Activated T-helper 1 cell treated with anti-CD3 and anti-CD28 coated beads, Interleukin-12 subunit alpha, Interleukin-12 subunit beta, Interleukin-2, Interleukin-4 antibody, amounts not matched to agents 30 ng/mL and 10 ng/mL and 1 ng/mL, durations not matched to agents 14 hours and 24 hours and 36 hours (primary cell): ENCODE measurements at regions of chr16 and their contacts with region 1.

Region 1: GRCh38 chr16:66521951-66522771 is 27.8 kb downstream of the TK2 start:
- DNase-seq: peak; percentile 88
- H3K4me3 Mint-ChIP-seq: peak overlapping the region; percentile 53
- H3K27ac Mint-ChIP-seq: peak overlapping the region; percentile 77
- H3K4me1 Mint-ChIP-seq: peaks cover 93% of the 10 kb centered on the region
- H3K27me3 Mint-ChIP-seq: peaks cover 2% of the 10 kb centered on the region

Region 2: DNA sequence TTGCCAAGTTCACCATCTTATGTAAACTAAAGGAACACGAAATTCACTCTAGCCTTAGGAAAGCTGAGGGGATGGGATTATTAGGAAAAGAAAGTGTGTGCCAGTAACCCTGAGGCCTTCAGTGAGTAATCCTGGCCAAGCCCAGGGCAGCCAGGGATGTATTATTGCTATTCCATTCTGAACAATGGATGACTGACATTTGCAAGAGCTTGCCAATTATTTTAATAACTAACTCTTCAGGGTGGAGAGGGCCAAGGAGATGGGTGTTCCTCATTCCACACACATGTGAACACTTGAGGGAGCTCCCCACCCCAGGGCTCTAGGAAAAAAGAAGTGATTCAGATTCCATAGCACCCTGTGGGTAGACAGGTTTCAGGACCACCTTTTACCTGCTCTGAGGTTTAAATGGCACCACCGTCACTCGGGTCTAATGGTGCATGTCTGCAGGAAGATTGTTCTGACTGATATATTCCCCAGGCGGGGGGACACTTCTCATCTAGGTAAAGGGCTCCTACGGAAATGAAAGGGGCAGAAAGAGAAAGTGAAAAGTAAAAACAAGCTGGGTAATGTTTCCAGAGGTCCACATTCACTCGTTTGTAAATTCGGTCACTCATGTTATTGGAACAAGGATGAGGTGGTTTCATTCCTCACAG is 13.8 kb before region 1 on chr16:
- intact Hi-C with region 1: loop called (anchors 1 kb)
- DNase-seq: no peak
- H3K4me3 Mint-ChIP-seq: no peak overlapping the region
- H3K27ac Mint-ChIP-seq: no peak overlapping the region
- H3K4me1 Mint-ChIP-seq: peaks cover 18% of the 10 kb centered on the region
- H3K27me3 Mint-ChIP-seq: no peaks in the 10 kb centered on the region

Region 3: GRCh38 chr16:66650707-66651473 is 128.7 kb after region 1 on chr16:
- intact Hi-C with region 1: no loop called
- DNase-seq: peak; percentile 68
- H3K4me3 Mint-ChIP-seq: no peak overlapping the region
- H3K27ac Mint-ChIP-seq: no peak overlapping the region
- H3K4me1 Mint-ChIP-seq: peaks cover 21% of the 10 kb centered on the region
- H3K27me3 Mint-ChIP-seq: peaks cover 2% of the 10 kb centered on the region